ENCODE measurements at regions of chr18 and their contacts with region 1.

Region 1: GRCh38 chr18:24426398-24427294 is at the start of gene IMPACT:
- DNase-seq: peak; percentile 69 to 82
- ATAC-seq: peak; percentile 97 to 98
- H3K4me3 ChIP-seq: peak within 1 kb of the TSS; percentile 71
- H3K27ac ChIP-seq: peak within 1 kb of the TSS; percentile 95 to 100
- H3K4me1 ChIP-seq: peaks cover 10% of the 10 kb centered on the region; the same call in 1 of the 3 replicates
- CTCF ChIP-seq: no peak
- EP300 ChIP-seq: no peak
- POLR2A ChIP-seq: peak; percentile 86
- RAD21 ChIP-seq: no peak
- polyA plus RNA-seq, gene IMPACT: 17.2 and 27.1 TPM in 2 replicates

Region 2: GRCh38 chr18:24397694-24398365 is 28.8 kb before region 1 on chr18 and contains the start of gene OSBPL1A:
- CTCF ChIA-PET with region 1: no interaction called
- POLR2A ChIA-PET with region 1: interaction called, 12 read pairs
- DNase-seq: peak; percentile 69 to 86
- ATAC-seq: peak; percentile 93 to 94
- H3K4me3 ChIP-seq: peak within 1 kb of the TSS; percentile 72
- H3K27ac ChIP-seq: peak within 1 kb of the TSS; percentile 78 to 91
- H3K4me1 ChIP-seq: peaks cover 16% of the 10 kb centered on the region; the same call in 2 of the 3 replicates
- CTCF ChIP-seq: no peak
- EP300 ChIP-seq: no peak
- POLR2A ChIP-seq: peak; percentile 50
- RAD21 ChIP-seq: no peak
- polyA plus RNA-seq, gene OSBPL1A: 17.6 and 22.1 TPM in 2 replicates